ENCODE measurements at regions of chr11 and their contacts with region 1.

Region 1: DNA sequence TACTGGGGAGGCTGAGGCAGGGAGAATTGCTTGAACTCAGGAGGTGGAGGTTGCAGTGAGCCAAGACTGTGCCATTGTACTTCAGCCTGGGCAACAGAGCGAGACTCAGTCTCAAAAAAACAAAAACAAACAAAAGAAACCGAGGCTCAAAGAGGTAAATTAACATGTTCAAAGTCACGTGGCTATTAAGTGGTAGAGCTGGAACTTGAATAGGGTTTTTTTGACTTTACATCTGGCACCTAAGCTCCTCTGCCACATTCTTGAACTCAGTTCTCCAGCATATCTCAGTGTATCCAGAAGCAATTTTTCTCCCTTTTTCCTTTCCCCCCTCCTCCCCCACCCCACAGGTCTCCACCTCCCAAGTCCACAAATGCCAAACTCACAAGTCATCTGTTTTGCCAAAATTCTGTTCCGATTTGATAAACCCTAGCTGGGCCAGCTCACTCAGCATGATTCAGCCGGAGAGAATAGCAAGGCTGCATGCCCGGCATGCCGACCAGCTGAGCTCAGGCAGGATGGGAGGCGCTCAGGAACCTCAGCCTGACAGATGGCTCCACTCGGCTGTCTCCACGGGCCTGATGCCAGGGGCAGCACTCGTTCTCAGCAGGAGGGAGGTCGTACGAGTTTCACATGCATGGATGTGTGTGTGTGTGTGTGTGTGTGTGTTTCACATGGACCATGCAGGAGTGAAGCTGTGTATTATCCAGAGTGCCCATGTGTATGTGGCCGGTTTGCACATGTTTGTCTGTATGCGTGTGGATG is 63.2 kb upstream of the RRAS2 start:
- DNase-seq: peak; percentile 97
- ATAC-seq: peak; percentile 98
- H3K4me3 ChIP-seq: peak overlapping the region; percentile 14; the same call in 1 of the 2 replicates
- H3K27ac ChIP-seq: no peak overlapping the region
- H3K4me1 ChIP-seq: peaks cover 38% of the 10 kb centered on the region
- H3K27me3 ChIP-seq: no peaks in the 10 kb centered on the region
- CTCF ChIP-seq: no peak

Region 2: DNA sequence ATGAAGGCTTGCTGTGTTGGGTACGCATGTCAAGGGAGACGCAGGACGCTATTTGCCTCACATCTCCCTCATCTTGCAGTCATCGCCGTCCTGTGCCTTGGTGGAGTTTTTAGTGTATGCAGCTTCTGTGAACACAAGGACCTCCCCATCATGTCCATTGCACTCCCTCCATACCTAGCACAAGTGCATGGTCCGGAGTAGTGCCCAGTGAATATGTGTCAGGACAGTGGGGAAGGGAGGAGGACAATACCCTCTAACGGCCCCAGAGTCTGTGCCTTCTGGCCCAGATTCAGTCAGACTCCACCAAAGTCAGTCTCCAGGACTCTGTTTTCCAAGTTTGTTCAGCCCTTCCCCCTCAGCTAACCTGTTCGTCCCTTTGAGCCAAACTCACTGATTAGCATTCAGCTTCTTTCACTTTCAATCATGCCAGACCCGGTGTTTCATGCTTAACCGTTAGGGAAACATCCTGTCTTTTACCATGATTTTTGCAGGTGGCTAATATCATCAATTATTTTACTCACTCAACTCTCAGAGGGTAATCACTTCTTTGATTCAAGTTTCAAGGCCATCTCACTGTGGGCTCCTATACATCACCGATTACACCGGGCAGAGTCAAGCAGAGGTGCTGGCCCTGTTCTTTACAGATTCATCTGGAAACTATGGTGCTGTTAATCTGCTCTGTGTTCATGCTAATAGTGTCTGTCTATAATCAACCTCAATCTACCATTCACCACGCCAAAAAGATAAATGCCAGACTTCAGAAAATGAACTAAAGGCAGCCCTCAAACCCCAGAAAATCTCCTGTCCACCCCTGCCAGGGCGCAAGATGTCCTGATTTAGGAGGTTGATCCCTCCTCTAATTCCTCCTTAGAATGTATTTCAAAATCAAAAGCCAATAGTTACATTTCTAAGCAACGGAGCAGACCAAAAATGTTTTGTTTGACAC is 219.7 kb before region 1 on chr11:
- CTCF ChIA-PET with region 1: interaction called, 11 read pairs
- POLR2A ChIA-PET with region 1: no interaction called
- intact Hi-C with region 1: no loop called
- DNase-seq: no peak
- ATAC-seq: no peak
- H3K4me3 ChIP-seq: no peak overlapping the region
- H3K27ac ChIP-seq: no peak overlapping the region
- H3K4me1 ChIP-seq: no peaks in the 10 kb centered on the region
- H3K27me3 ChIP-seq: peaks cover 17% of the 10 kb centered on the region; the same call in 1 of the 2 replicates
- CTCF ChIP-seq: no peak

Region 3: GRCh38 chr11:14223636-14224288 is 198.5 kb before region 1 on chr11:
- CTCF ChIA-PET with region 1: no interaction called
- POLR2A ChIA-PET with region 1: no interaction called
- intact Hi-C with region 1: no loop called
- DNase-seq: no peak
- ATAC-seq: peak; percentile 22; the same call in 1 of the 2 replicates
- H3K4me3 ChIP-seq: no peak overlapping the region
- H3K27ac ChIP-seq: no peak overlapping the region
- H3K4me1 ChIP-seq: no peaks in the 10 kb centered on the region
- H3K27me3 ChIP-seq: peaks cover 37% of the 10 kb centered on the region
- CTCF ChIP-seq: no peak

Region 4: DNA sequence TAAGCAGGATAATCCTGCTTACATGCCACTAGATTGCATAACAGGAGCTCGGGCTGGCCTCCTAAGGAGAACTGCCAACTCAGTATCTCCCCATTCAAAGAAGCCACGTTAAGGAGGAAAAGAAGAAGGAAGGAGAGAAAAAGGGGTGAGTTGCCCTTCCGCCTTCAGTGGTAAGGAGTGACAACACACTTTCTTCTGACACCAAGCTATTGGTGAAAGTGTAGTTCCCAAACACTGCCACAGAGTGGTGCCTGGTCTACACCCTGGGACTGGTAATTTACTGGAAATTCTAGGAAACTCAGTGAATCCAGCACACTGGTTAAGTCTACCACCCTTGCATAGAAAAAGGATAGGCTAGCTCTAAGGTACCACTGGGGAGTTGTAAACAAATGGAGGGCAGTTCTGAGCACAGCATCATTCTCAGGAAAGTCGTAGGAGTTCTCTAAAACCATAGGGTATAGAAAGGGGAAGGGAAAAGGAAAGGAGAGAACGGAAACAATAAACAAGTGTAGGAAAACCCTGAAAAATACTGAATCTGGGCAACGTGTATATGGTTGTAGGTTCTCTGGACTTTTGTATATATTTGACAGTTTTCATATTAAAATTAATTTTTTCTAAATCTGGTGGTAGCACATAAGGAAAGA is 121.5 kb before region 1 on chr11:
- CTCF ChIA-PET with region 1: interaction called, 40 read pairs
- POLR2A ChIA-PET with region 1: no interaction called
- intact Hi-C with region 1: loop called (anchors 1 kb)
- DNase-seq: peak; percentile 80
- ATAC-seq: peak; percentile 98
- H3K4me3 ChIP-seq: no peak overlapping the region
- H3K27ac ChIP-seq: no peak overlapping the region
- H3K4me1 ChIP-seq: no peaks in the 10 kb centered on the region
- H3K27me3 ChIP-seq: no peaks in the 10 kb centered on the region
- CTCF ChIP-seq: peak; percentile 89

Region 5: DNA sequence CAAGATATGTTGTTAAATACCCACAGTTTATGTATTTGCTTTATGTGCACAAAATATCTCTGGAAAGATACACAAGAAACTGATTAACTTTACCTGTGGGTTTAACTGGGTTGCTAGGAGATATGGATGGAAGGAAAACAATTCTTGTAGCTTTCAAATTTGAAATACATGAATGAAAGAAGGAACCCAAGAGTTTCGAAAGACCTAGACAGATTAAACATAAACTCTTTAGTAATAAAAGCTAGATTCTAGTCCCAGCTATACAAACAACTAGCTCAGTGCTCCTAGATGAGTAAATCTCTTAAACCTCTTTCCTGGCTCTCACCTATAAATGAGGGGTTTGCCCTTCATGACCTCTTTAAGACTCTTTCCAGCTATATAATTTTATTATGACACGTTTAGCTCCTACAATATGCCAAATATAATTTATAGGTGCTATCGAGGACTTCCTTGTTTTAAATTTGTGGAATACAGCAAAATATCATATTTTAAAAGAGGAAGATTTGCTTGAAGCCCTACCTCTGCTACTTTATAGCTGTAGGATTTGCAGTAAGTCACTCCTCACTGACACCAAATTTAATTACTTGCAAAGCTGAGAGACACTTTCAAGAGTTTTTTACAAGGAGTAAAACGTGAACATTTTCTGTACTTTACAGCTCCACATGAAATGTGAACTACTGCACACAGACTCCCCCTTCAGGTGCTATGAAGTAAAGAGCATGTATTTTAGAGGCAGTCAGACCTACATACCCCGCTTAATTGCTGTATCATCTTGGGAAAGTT is 113.9 kb before region 1 on chr11:
- CTCF ChIA-PET with region 1: interaction called, 22 read pairs
- POLR2A ChIA-PET with region 1: no interaction called
- intact Hi-C with region 1: no loop called
- DNase-seq: peak; percentile 62
- ATAC-seq: peak; percentile 49
- H3K4me3 ChIP-seq: peak overlapping the region; percentile 22; the same call in 1 of the 2 replicates
- H3K27ac ChIP-seq: peak overlapping the region; percentile 14
- H3K4me1 ChIP-seq: peaks cover 36% of the 10 kb centered on the region
- H3K27me3 ChIP-seq: no peaks in the 10 kb centered on the region
- CTCF ChIP-seq: peak; percentile 69